ENCODE measurements at regions of chr17 and their contacts with region 1.

Region 1: DNA sequence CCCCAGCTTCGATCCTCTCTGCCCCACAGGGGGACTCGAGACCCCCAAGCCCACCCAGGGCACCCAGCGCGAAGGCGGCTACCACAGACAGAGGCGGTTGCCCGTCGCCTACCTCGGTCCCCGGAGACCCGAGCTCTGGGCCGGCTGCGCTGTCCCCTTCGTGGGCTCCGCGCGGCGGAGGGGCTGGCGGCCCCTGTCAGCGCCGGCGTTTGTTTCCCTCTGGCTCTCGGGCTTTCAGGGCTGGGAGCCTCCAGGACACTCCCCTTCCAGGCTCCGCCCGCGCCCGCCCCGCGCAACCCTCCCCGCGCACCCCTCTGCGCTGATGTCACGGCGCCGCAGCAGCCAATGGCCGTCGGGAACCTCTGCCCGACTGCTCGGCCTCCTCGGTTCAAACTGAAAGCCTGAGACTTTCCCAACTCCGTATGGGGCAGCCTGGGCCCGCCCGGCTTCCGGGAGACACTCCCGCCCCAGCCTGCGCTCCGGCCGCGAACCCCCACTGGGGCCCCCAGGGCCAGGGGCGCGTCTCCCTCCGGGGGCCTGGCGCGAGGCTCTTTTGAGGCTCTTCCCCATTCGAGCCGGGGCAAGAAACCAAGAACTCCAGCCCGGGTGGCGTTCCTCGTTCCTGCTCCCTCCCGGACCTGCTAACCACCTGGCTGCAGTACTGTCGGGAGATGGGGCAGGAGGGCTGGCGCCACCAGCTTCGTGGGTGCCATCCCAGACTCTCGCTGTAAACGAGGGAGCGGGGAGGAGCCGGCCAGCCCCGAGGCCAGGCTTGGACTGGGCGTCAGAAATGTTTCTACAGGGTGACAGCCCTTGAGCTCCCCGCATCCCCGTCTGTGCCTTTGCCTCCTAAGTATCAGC is at the start of gene CDC42EP4:
- DNase-seq: peak; percentile 92
- CTCF ChIP-seq: no peak

Region 2: DNA sequence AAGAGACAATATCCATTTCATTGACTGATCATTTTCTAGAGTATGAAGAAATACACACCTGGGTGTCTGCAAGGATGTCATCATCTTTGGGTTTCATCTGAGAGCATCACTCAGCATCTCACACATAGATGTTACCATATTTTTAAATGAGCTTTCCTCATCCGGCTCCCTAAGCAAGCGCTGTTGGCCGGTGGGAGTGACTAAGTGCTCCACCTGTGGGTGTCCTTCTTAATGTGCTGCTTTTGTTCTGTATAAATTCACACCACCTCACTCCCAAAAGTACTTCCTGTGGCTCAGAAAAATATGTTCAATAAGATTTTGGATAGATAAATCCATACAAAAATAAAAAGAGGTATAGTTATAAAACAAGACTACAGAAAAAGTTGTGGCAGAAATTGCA is 139.8 kb before region 1 on chr17:
- CTCF ChIA-PET with region 1: no interaction called
- POLR2A ChIA-PET with region 1: no interaction called
- DNase-seq: no peak
- CTCF ChIP-seq: no peak

Region 3: DNA sequence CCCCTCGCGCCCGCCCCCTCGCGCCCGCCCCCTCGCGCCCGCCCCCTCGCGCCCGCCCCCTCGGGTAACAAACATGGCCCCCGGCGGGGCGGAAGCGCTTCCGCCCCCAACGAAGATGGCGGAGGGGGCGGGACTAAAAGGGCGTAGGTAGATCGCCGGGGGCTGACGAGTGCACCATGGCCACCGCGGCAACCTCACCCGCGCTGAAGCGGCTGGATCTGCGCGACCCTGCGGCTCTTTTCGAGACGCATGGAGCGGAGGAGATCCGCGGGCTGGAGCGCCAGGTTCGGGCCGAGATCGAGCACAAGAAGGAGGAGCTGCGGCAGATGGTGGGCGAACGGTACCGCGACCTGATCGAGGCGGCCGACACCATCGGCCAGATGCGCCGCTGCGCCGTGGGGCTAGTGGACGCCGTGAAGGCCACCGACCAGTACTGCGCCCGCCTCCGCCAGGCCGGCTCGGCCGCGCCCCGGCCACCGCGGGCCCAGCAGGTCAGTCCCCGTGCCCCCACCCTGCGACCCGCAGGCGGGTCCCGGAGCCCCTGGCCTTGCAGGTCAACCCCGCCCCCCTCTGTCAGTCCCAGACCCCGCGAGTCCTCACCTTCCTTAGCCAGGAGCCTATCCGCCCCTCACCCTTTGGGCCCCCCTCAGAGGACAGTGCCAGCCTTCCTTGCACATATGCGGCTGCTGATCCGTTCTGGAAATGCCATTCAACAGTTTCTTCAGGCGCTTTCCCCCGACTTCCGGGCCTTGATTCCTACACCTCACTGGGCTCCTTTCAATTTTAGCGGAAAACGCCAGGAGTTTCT is 118.9 kb before region 1 on chr17 and contains the start of gene COG1:
- CTCF ChIA-PET with region 1: no interaction called
- POLR2A ChIA-PET with region 1: no interaction called
- DNase-seq: peak; percentile 96
- CTCF ChIP-seq: no peak

Region 4: GRCh38 chr17:73291260-73291801 is 20.7 kb before region 1 on chr17:
- CTCF ChIA-PET with region 1: interaction called, 13 read pairs
- POLR2A ChIA-PET with region 1: no interaction called
- DNase-seq: peak; percentile 71
- CTCF ChIP-seq: no peak

Region 5: DNA sequence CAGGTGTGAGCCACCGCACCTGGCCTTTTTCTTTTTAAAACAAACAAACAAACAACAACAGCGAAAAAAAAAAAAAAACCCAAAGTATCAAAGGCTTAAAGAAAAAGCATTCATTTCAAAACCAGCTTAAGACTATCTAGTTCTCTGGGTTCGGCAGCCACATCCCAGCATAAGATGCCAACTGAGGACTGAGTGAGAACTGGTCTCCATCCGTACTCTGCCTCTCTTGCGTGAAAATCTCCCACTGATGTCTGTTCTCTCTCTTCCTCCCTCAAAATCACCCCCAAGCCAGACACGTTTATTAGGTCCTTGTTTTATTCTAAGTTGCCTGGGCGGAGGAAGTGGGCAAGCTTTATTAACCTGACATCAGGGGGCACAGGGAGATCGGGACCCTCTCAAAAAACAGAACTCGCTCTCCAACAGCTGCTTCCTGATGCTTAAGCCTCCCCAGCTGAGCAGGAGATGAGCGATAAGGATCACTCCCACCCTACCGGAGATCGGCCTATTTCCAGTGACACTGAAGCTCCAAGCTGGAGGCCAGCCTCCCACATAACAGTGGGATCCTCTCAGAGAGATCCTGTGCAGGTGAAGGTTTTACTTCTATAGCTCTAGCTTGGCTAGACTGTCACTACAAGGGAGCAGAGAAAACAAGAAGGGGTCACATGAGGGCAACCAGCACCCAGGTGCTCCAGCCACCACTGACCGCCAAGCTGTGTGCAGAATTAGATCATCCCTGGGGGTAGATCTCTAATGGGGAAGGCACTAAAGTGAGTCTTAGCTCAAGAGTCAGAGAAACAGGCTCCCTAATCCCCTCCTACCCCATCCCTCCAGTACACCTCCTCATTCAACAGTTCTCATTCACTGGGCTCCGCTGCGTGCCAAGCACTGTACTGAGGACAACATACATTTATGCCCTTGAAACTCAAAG is 13.8 kb before region 1 on chr17:
- CTCF ChIA-PET with region 1: interaction called, 10 read pairs
- POLR2A ChIA-PET with region 1: no interaction called
- DNase-seq: no peak
- CTCF ChIP-seq: no peak

Region 6: GRCh38 chr17:73501431-73501830 is 189.4 kb after region 1 on chr17:
- CTCF ChIA-PET with region 1: no interaction called
- POLR2A ChIA-PET with region 1: no interaction called
- DNase-seq: no peak
- CTCF ChIP-seq: no peak

Measured in GM10248 (cell line).